Activated naive CD4-positive, alpha-beta T cell treated with anti-CD3 and anti-CD28 coated beads for 36 hours (primary cell): ENCODE measurements at regions of chr2 and their contacts with region 1.

Region 1: GRCh38 chr2:32627814-32628579 is at the start of gene TTC27:
- DNase-seq: peak; percentile 97
- H3K4me3 Mint-ChIP-seq: peak within 1 kb of the TSS; percentile 89
- H3K27ac Mint-ChIP-seq: peak within 1 kb of the TSS; percentile 87
- H3K4me1 Mint-ChIP-seq: peaks cover 31% of the 10 kb centered on the region
- H3K27me3 Mint-ChIP-seq: no peaks in the 10 kb centered on the region
- total RNA-seq, gene TTC27: 25.2 to 27.5 TPM

Region 2: DNA sequence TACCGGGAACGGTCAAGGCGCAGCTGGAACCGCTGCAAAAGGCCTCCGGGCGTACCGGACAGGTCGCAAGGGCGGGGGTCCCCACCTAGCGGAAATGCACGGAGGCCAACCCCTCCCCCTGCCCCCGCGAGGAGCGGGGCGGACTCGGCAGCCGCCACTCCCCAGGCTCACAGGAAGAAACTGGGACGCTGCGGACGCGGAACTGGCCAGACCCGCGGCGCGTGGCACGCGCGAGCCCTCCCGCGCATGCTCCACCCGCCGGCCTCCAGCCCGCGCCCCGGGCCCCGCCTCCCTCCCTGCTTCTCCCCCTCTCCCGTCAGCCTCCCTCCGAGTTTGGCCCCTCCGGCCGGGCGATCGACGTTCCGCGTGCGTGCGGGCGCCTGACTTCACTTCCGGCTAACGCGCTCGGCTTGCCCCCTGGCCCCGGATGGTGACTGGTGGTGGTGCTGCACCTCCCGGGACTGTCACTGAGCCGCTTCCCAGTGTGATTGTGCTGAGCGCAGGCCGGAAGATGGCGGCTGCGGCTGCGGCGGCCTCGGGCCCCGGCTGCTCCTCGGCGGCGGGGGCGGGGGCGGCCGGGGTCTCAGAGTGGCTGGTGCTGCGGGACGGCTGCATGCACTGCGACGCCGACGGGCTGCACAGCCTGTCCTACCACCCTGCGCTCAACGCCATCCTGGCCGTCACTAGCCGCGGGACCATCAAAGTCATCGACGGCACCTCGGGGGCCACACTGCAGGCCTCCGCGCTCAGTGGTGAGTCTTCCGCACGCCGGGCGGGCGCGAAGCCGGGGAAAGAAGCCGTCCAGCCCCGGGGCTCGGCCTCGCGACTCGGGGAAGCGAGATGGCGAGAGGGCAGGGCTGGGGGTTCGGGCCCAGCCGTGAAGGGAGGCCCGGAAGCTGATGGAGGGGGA is 271.0 kb before region 1 on chr2 and contains the start of gene BIRC6:
- CTCF ChIA-PET with region 1: no interaction called
- intact Hi-C with region 1: loop called (anchors 1 kb)
- DNase-seq: peak; percentile 97
- H3K4me3 Mint-ChIP-seq: peak within 1 kb of the TSS; percentile 78
- H3K27ac Mint-ChIP-seq: peak within 1 kb of the TSS; percentile 85
- H3K4me1 Mint-ChIP-seq: peaks cover 31% of the 10 kb centered on the region
- H3K27me3 Mint-ChIP-seq: no peaks in the 10 kb centered on the region
- total RNA-seq, gene BIRC6: 51.4 to 52.9 TPM

Region 3: DNA sequence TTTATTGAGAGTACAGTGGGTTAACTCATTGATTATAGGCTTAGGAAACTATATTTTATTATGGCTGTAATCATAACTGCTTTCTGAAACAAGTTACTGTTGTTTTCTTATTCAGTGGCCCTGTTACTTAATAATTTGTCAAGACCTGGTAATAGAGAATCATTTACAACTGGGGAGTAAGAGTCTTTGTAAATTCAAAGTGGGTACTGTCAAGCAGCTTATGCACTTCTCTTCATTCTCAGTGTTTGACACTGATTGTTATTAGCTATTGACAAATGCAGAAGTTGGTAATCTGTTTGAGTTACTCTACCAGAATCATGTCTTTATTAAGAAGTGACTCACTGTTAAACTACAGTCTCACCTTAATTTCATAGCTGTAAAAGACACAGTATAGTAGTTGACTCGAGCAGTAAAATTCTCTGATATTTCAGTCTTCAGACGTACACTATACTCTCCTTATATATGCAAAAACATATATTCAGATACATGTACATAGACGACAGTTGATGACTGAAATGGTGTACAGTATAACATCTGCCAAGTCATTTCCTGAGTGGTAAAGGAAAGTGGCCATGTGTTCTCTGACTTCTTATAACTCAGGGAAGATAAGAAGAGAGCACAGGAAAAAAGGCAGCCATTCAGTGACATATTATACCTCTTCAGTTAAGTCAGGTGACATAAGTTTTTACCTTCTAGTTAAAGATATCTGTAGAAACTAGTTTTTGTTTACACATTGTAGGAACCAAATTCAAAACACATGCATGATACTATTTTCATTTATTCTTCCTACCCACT is 36.1 kb before region 1 on chr2:
- CTCF ChIA-PET with region 1: interaction called, 3 read pairs
- intact Hi-C with region 1: loop called (anchors 1 kb)
- DNase-seq: peak; percentile 20
- H3K4me3 Mint-ChIP-seq: peak overlapping the region; percentile 39
- H3K27ac Mint-ChIP-seq: peak overlapping the region; percentile 90
- H3K4me1 Mint-ChIP-seq: peaks cover 36% of the 10 kb centered on the region
- H3K27me3 Mint-ChIP-seq: no peaks in the 10 kb centered on the region

Region 4: GRCh38 chr2:32641180-32641579 is 13.2 kb after region 1 on chr2:
- CTCF ChIA-PET with region 1: no interaction called
- intact Hi-C with region 1: no loop called
- DNase-seq: no peak
- H3K4me3 Mint-ChIP-seq: no peak overlapping the region
- H3K27ac Mint-ChIP-seq: no peak overlapping the region
- H3K4me1 Mint-ChIP-seq: no peaks in the 10 kb centered on the region
- H3K27me3 Mint-ChIP-seq: no peaks in the 10 kb centered on the region

Region 5: DNA sequence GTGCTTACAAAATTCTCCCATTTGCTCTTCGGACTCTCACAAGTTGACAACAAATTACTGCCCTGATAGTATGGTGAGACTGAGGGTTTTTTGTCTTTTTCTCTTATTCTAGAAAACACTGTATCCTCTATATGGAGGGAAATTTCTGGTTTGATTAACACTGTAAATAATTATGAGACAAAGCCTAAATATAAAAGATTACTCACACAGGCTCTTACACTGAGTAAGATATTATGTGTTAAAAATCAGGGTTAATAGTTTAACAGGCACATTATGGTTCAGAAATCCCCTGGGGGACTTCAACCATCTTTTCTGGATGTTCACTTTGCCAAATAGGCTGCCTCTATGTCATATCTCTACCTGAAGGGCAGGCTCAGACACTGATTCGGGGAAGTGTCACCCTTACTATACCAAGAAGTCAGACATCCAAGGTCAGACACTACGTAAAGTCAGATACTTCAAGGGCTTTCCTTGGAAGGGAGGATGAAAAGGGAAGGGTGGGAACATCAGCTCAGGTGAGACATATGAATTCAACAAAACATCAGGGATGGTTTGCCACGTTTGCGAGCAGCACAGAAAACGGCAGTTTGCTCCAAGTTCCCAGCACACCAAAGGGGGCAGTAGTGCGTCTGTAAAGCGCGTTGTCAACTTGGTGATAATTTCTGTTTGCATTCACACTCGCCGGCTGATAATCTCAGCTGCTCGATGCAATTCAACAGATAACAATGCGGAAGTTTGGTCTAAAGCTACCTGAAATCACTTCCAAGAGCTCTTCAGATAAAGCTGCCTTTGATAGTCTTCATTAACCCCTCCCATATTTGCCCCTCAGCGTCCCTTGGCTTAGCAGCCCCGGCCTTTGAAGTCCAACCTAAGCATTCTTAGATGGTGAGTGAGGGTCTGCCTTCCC is 847.5 kb after region 1 on chr2:
- CTCF ChIA-PET with region 1: no interaction called
- intact Hi-C with region 1: loop called (anchors 10 kb)
- DNase-seq: peak; percentile 89
- H3K4me3 Mint-ChIP-seq: peak overlapping the region; percentile 81
- H3K27ac Mint-ChIP-seq: peak overlapping the region; percentile 91
- H3K4me1 Mint-ChIP-seq: peaks cover 25% of the 10 kb centered on the region
- H3K27me3 Mint-ChIP-seq: no peaks in the 10 kb centered on the region